Activated CD4-positive, alpha-beta T cell treated with anti-CD3 and anti-CD28 coated beads for 36 hours (primary cell): ENCODE measurements at regions of chr2 and their contacts with region 1.

Region 1: DNA sequence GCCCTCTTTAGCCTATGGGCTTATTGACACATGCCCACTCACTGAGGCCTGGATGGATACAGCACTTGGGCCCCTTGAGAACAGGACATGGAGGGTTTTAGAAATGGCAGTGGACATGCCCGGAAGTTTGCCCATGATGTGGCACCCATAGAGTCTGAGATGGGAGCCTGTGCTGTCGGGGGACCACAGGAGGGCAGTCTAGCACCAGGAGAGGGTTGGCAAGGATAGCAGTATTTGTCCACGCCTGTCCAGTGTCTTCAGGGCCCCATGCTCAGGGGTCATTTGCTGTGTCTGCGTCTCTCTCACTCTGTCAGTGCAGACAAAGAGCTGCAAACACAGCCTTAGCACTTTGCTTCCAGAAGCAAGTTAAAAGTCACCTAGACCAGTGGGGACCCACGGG is 48.7 kb downstream of the IL1RL2 start:
- DNase-seq: peak; percentile 54
- ATAC-seq: no peak
- H3K4me3 Mint-ChIP-seq: no peak overlapping the region
- H3K27ac Mint-ChIP-seq: peak overlapping the region; percentile 12
- H3K4me1 Mint-ChIP-seq: peaks cover 65% of the 10 kb centered on the region
- H3K27me3 Mint-ChIP-seq: no peaks in the 10 kb centered on the region

Region 2: GRCh38 chr2:101435001-101435862 is 800.3 kb before region 1 on chr2:
- CTCF ChIA-PET with region 1: no interaction called
- POLR2A ChIA-PET with region 1: no interaction called
- intact Hi-C with region 1: no loop called
- DNase-seq: no peak
- ATAC-seq: no peak
- H3K4me3 Mint-ChIP-seq: no peak overlapping the region
- H3K27ac Mint-ChIP-seq: no peak overlapping the region
- H3K4me1 Mint-ChIP-seq: peaks cover under 1% of the 10 kb centered on the region
- H3K27me3 Mint-ChIP-seq: no peaks in the 10 kb centered on the region

Region 3: GRCh38 chr2:102005989-102006885 is 229.3 kb before region 1 on chr2:
- CTCF ChIA-PET with region 1: interaction called, 68 read pairs
- POLR2A ChIA-PET with region 1: interaction called, 3 read pairs
- intact Hi-C with region 1: loop called (anchors 1 to 2 kb)
- DNase-seq: peak; percentile 67
- ATAC-seq: peak; percentile 27
- H3K4me3 Mint-ChIP-seq: peak overlapping the region; percentile 5
- H3K27ac Mint-ChIP-seq: peak overlapping the region; percentile 77
- H3K4me1 Mint-ChIP-seq: peaks cover 16% of the 10 kb centered on the region
- H3K27me3 Mint-ChIP-seq: no peaks in the 10 kb centered on the region

Region 4: DNA sequence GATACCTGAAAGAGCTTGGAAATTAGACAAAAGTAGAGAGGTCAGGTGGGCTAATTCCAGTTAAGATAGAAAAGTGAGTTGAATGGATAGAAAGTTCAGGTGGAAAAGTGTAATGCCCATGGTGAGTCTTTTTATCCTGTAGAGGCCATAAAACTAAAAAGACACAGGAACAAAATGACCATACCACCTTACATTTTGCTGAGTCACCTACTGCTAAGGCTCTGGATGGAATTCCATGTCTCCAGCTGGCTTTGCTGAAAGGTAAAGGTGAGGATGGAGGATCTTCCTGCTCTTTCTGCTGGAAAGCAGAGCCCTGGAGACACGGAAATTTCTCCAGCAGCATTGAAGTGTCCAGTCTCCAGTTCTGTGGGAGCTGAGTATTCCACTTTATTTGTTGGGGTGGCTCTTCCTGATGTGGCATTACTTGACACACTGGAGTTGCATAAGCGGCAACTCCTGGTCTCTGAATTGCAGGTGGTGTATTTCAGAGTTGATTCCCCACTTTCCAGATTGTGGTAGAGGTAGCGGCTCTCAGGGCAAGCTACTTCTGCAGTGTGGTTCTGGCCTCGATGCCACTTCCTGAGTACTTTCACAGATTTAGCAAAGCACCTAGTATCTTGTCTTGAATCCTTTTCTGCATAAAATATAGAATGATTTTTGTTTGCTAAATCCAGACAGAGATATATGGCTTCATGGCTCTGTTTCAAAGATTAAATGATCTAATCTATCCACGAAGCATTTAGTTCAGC is 37.9 kb before region 1 on chr2:
- CTCF ChIA-PET with region 1: no interaction called
- POLR2A ChIA-PET with region 1: no interaction called
- intact Hi-C with region 1: no loop called
- DNase-seq: no peak
- ATAC-seq: no peak
- H3K4me3 Mint-ChIP-seq: no peak overlapping the region
- H3K27ac Mint-ChIP-seq: no peak overlapping the region
- H3K4me1 Mint-ChIP-seq: peaks cover 7% of the 10 kb centered on the region
- H3K27me3 Mint-ChIP-seq: peaks cover 5% of the 10 kb centered on the region